ENCODE measurements at regions of chr13 and their contacts with region 1.

Region 1: GRCh38 chr13:50801087-50801931 is 42.2 kb downstream of the DLEU7 start:
- DNase-seq: peak; percentile 25 to 77
- H3K4me3 ChIP-seq: peak overlapping the region in 2 of 4 experiments; percentile 2 to 41; a peak in 4 of 8 replicates
- H3K27ac ChIP-seq: no peak overlapping the region
- H3K4me1 ChIP-seq: peaks cover 0 to 7% (median 4%) of the 10 kb centered on the region in 4 experiments; a peak in 4 of 7 replicates
- H3K27me3 ChIP-seq: no peaks in the 10 kb centered on the region
- CTCF ChIP-seq: peak; percentile 61 to 85 (median 70)
- EP300 ChIP-seq: no peak
- POLR2A ChIP-seq: no peak
- RAD21 ChIP-seq: peak; percentile 95 to 96

Region 2: GRCh38 chr13:50812242-50812641 is 10.9 kb after region 1 on chr13:
- CTCF ChIA-PET with region 1: interaction called, 10 read pairs
- POLR2A ChIA-PET with region 1: no interaction called
- DNase-seq: no peak
- H3K4me3 ChIP-seq: no peak overlapping the region
- H3K27ac ChIP-seq: no peak overlapping the region
- H3K4me1 ChIP-seq: no peaks in the 10 kb centered on the region
- H3K27me3 ChIP-seq: no peaks in the 10 kb centered on the region
- CTCF ChIP-seq: no peak
- EP300 ChIP-seq: no peak
- POLR2A ChIP-seq: no peak
- RAD21 ChIP-seq: no peak